ENCODE measurements at regions of chr1 and their contacts with region 1.

Region 1: GRCh38 chr1:66788231-66788939 is 12.7 kb downstream of the INSL5 start:
- DNase-seq: peak; percentile 25
- H3K4me3 Mint-ChIP-seq: peak overlapping the region; percentile 63
- H3K27ac Mint-ChIP-seq: peak overlapping the region; percentile 57
- H3K4me1 Mint-ChIP-seq: peaks cover 24% of the 10 kb centered on the region
- H3K27me3 Mint-ChIP-seq: no peaks in the 10 kb centered on the region

Region 2: GRCh38 chr1:66725885-66726665 is 62.3 kb before region 1 on chr1:
- intact Hi-C with region 1: no loop called
- DNase-seq: peak; percentile 54
- H3K4me3 Mint-ChIP-seq: no peak overlapping the region
- H3K27ac Mint-ChIP-seq: no peak overlapping the region
- H3K4me1 Mint-ChIP-seq: peaks cover 19% of the 10 kb centered on the region
- H3K27me3 Mint-ChIP-seq: peaks cover 12% of the 10 kb centered on the region

Region 3: GRCh38 chr1:66981679-66982078 is 193.3 kb after region 1 on chr1:
- intact Hi-C with region 1: loop called (anchors 5 kb)
- DNase-seq: peak; percentile 40
- H3K4me3 Mint-ChIP-seq: peak overlapping the region; percentile 69
- H3K27ac Mint-ChIP-seq: peak overlapping the region; percentile 75
- H3K4me1 Mint-ChIP-seq: peaks cover 35% of the 10 kb centered on the region
- H3K27me3 Mint-ChIP-seq: no peaks in the 10 kb centered on the region

Measured in activated T-helper 1 cell treated with anti-CD3 and anti-CD28 coated beads, Interleukin-12 subunit alpha, Interleukin-12 subunit beta, Interleukin-2, Interleukin-4 antibody, amounts not matched to agents 30 ng/mL and 10 ng/mL and 1 ng/mL, durations not matched to agents 14 hours and 24 hours and 36 hours (primary cell).